Stomach (tissue), 19 donors: ENCODE measurements at regions of chr4 and their contacts with region 1.

Region 1: GRCh38 chr4:186587416-186588018 is 32.1 kb upstream of the MTNR1A start:
- DNase-seq: peak; percentile 78 to 87
- H3K4me3 ChIP-seq: no peak overlapping the region
- H3K27ac ChIP-seq: no peak overlapping the region
- H3K4me1 ChIP-seq: peaks cover 0 to 2% (median 0%) of the 10 kb centered on the region in 4 donors
- H3K27me3 ChIP-seq: no peaks in the 10 kb centered on the region
- CTCF ChIP-seq: peak in 5 of 7 experiments; percentile 36 to 90 (median 86)
- EP300 ChIP-seq: no peak
- POLR2A ChIP-seq: no peak

Region 2: DNA sequence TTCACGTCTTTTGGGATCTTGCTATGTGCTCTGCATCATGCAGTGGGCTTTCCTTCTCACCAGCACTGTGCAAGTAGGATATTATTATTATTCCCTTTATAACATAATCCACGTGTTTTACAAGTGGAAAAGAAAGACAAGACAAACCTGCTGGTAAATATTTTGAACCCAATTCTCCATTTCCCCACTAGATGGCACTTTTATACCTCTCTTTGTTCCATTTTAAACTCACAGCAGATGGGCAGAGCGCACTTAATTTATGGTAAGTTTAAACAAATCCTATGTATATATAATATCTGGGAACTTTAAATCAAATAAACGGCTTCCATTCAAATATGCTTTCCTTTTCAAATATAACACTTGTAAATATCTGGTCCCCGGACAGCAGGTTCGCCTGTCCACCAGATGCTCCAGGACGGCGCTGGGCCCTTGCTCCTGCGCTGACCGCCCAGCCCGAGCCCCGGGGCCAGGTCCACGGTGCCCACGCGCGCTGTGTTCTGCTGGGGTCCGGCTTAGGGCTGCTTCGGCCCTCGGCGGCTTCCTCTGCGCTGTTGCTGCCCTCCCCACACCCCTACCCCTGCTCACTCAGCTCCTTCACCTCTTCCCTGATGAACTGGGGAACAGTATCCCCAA is 290.4 kb before region 1 on chr4:
- intact Hi-C with region 1: loop called (anchors 10 kb)
- DNase-seq: peak in 1 of 2 donors; percentile 79
- H3K4me3 ChIP-seq: no peak overlapping the region
- H3K27ac ChIP-seq: no peak overlapping the region
- H3K4me1 ChIP-seq: peaks cover 0 to 9% (median 0%) of the 10 kb centered on the region in 4 donors
- H3K27me3 ChIP-seq: peaks cover 0 to 23% (median 14%) of the 10 kb centered on the region in 3 donors
- CTCF ChIP-seq: peak in 5 of 7 experiments; percentile 19 to 59 (median 47)
- EP300 ChIP-seq: no peak
- POLR2A ChIP-seq: no peak

Region 3: GRCh38 chr4:186485561-186486062 is 101.9 kb before region 1 on chr4:
- intact Hi-C with region 1: loop called (anchors 10 kb)
- DNase-seq: peak in 1 of 2 donors; percentile 53
- H3K4me3 ChIP-seq: peak overlapping the region; percentile 23 to 31 (median 27)
- H3K27ac ChIP-seq: no peak overlapping the region
- H3K4me1 ChIP-seq: peaks cover 0 to 15% (median 5%) of the 10 kb centered on the region in 4 donors
- H3K27me3 ChIP-seq: peaks cover 0 to 9% (median 0%) of the 10 kb centered on the region in 3 donors
- CTCF ChIP-seq: no peak
- EP300 ChIP-seq: no peak
- POLR2A ChIP-seq: no peak